B cell (primary cell): ENCODE measurements at regions of chr5 and their contacts with region 1.

Region 1: DNA sequence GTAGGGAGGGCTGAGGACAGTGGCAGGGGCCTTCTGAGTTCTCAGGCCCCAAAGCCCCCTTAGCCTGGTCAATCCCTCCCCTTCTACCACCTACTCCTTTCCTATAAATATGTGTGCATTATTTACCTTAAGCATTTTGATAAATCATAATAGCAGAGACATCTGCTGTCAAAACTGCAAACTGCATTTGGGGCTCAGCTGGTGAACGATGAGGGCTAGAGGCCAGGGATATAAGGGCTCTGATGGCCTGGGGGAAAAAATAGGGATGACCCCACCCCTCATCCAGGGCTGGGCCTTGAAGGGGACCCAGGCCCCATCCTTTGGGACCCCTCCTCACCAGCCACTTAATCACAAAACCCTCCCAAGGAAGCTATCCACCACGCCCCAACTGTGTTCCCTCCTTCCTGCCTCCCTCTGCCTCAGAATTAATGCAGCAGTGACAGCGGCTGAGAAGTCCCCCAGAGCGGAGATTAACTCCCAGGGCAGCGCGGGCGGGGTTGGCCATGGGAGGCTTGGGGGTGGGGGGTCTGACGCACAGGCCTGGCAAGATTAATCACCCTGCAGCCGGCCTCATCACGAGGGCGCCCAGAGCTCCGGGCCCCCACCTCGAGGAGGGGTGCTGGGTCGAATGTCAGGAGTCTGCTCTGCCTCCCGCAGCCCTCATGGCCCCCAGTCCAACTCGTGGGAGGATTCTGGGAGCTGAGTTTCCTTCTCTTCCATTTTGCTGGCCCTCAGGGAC is 42.1 kb downstream of the CXXC5 start:
- DNase-seq: peak; percentile 71
- ATAC-seq: peak; percentile 51
- H3K4me3 ChIP-seq: peak overlapping the region in 2 of 5 experiments; percentile 8 to 9
- H3K4me3 Mint-ChIP-seq: peak overlapping the region; percentile 41
- H3K27ac ChIP-seq: peak overlapping the region; percentile 28 to 47
- H3K27ac Mint-ChIP-seq: peak overlapping the region; percentile 78
- H3K4me1 ChIP-seq: peaks cover 47 to 56% of the 10 kb centered on the region in 2 donors
- H3K4me1 Mint-ChIP-seq: peaks cover 52% of the 10 kb centered on the region
- H3K27me3 ChIP-seq: no peaks in the 10 kb centered on the region
- H3K27me3 Mint-ChIP-seq: no peaks in the 10 kb centered on the region
- CTCF ChIP-seq: peak; percentile 70

Region 2: GRCh38 chr5:139646912-139647505 is 43.2 kb before region 1 on chr5:
- CTCF ChIA-PET with region 1: interaction called, 41 read pairs
- POLR2A ChIA-PET with region 1: interaction called, 21 read pairs
- intact Hi-C with region 1: no loop called
- DNase-seq: peak; percentile 58
- ATAC-seq: no peak
- H3K4me3 ChIP-seq: peak overlapping the region; percentile 38 to 98 (median 95)
- H3K4me3 Mint-ChIP-seq: peak overlapping the region; percentile 88
- H3K27ac ChIP-seq: no peak overlapping the region
- H3K27ac Mint-ChIP-seq: peak overlapping the region; percentile 89
- H3K4me1 ChIP-seq: peaks cover 39 to 68% of the 10 kb centered on the region in 2 donors
- H3K4me1 Mint-ChIP-seq: peaks cover 66% of the 10 kb centered on the region
- H3K27me3 ChIP-seq: no peaks in the 10 kb centered on the region
- H3K27me3 Mint-ChIP-seq: no peaks in the 10 kb centered on the region
- CTCF ChIP-seq: no peak

Region 3: DNA sequence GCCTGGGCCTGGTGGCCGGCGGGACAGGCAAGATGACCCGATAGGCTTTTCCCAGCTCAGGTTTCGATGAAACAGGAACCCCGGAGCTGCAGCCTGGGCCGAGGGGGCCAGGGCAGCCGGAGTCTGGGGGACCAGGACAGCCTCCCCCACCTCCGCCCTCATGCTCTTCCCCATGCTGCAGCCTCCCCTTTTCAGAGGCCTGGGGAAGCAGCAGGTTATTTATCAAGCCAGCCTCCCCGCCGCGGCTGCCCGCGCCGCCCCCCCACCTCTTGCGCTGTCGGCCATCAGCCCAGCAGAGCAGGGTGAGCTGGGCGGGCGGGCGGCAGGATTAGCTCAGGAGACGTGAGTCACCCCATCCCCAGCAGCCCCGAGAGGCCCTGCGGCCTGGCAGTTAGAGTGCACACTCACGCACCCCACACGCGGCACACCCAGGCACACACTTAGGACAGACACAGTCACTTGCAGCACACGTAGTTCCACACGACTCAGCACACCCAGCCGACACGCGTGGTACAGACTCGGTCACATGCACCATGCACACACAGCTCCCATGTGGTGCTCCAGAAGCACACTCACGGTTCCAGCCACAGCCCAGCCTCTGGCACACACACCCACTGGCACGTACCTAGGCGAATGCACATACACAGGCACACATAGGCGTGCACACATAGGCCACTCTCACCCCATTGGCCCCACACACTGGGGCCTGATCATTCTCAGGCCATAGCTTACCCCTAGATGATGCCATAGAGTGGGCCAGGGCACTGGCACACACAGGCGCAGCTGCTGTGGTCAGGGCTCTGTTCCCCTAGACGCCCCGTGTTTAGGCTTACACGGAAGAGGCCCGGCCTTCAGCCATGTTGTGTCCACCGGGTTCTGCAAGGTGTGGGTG is 29.1 kb before region 1 on chr5:
- CTCF ChIA-PET with region 1: interaction called, 15 read pairs
- POLR2A ChIA-PET with region 1: interaction called, 9 read pairs
- intact Hi-C with region 1: no loop called
- DNase-seq: peak; percentile 65
- ATAC-seq: peak; percentile 71
- H3K4me3 ChIP-seq: peak overlapping the region in 3 of 5 experiments; percentile 4 to 16 (median 15)
- H3K4me3 Mint-ChIP-seq: peak overlapping the region; percentile 86
- H3K27ac ChIP-seq: peak overlapping the region; percentile 43 to 90
- H3K27ac Mint-ChIP-seq: peak overlapping the region; percentile 99
- H3K4me1 ChIP-seq: peaks cover 98 to 100% of the 10 kb centered on the region in 2 donors
- H3K4me1 Mint-ChIP-seq: peaks cover 92% of the 10 kb centered on the region
- H3K27me3 ChIP-seq: no peaks in the 10 kb centered on the region
- H3K27me3 Mint-ChIP-seq: no peaks in the 10 kb centered on the region
- CTCF ChIP-seq: no peak

Region 4: DNA sequence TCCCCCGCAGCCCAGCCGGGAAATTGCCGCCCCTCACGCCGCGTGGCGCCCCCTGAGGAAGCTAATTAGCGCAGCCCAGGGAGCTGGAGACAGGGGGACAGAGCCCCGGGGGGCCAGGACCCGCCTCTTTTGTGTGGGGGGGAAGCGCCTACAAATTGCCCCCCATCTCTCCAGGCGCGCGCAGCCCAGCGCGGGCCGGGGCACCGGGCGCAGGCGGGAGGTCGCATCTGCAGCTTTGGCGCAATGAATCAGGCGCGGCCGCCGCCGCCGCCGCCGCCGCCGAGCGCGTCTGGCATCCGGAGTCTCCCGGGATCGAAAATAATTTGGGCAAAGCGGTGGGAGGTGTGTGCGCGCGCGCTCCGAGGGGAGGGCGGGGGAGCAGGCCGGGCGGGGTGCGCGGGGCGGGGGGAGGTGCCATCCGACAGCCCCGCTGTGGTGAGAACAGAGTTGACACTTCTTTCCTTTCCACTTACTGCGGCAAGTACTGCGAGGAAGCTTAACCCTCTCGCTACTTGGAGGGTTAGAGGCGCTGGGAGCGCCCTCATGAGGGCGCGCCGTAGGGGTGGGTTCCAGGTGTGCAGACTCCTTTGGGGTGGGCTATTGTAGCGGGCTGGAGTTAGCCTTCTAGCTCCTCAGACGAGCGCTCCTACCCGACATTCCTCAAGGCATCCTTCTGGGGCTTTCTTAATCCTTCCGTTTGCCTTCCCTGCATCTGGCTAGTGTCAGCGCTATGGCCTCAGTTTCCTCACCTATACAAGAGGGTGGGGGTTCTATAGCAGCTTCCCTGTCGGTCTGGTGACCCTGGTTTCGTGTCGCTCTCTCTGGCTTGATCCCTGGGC is 21.1 kb after region 1 on chr5:
- CTCF ChIA-PET with region 1: interaction called, 22 read pairs
- POLR2A ChIA-PET with region 1: interaction called, 15 read pairs
- intact Hi-C with region 1: no loop called
- DNase-seq: peak; percentile 77
- ATAC-seq: peak; percentile 51
- H3K4me3 ChIP-seq: peak overlapping the region; percentile 54 to 73 (median 60)
- H3K4me3 Mint-ChIP-seq: peak overlapping the region; percentile 90
- H3K27ac ChIP-seq: peak overlapping the region in 1 of 2 donors; percentile 75
- H3K27ac Mint-ChIP-seq: peak overlapping the region; percentile 81
- H3K4me1 ChIP-seq: peaks cover 27 to 37% of the 10 kb centered on the region in 2 donors
- H3K4me1 Mint-ChIP-seq: peaks cover 40% of the 10 kb centered on the region
- H3K27me3 ChIP-seq: peaks cover 0 to 5% (median 2%) of the 10 kb centered on the region in 4 experiments
- H3K27me3 Mint-ChIP-seq: no peaks in the 10 kb centered on the region
- CTCF ChIP-seq: no peak